ENCODE measurements at regions of chr15 and their contacts with region 1.

Region 1: GRCh38 chr15:52179278-52180195 is 11.7 kb downstream of the GNB5 start:
- DNase-seq: peak; percentile 90
- H3K4me3 ChIP-seq: peak overlapping the region; percentile 85
- H3K27ac ChIP-seq: peak overlapping the region; percentile 81
- H3K4me1 ChIP-seq: peaks cover 65% of the 10 kb centered on the region
- CTCF ChIP-seq: no peak

Region 2: GRCh38 chr15:51966192-51966591 is 213.3 kb before region 1 on chr15:
- CTCF ChIA-PET with region 1: no interaction called
- POLR2A ChIA-PET with region 1: no interaction called
- intact Hi-C with region 1: no loop called
- DNase-seq: no peak
- H3K4me3 ChIP-seq: no peak overlapping the region
- H3K27ac ChIP-seq: no peak overlapping the region
- H3K4me1 ChIP-seq: peaks cover 11% of the 10 kb centered on the region
- CTCF ChIP-seq: no peak

Region 3: GRCh38 chr15:52039925-52040781 is 139.4 kb before region 1 on chr15:
- CTCF ChIA-PET with region 1: no interaction called
- POLR2A ChIA-PET with region 1: no interaction called
- intact Hi-C with region 1: no loop called
- DNase-seq: peak; percentile 25
- H3K4me3 ChIP-seq: no peak overlapping the region
- H3K27ac ChIP-seq: peak overlapping the region; percentile 20
- H3K4me1 ChIP-seq: peaks cover 85% of the 10 kb centered on the region
- CTCF ChIP-seq: no peak

Region 4: GRCh38 chr15:52100807-52101206 is 78.7 kb before region 1 on chr15:
- CTCF ChIA-PET with region 1: no interaction called
- POLR2A ChIA-PET with region 1: no interaction called
- intact Hi-C with region 1: no loop called
- DNase-seq: no peak
- H3K4me3 ChIP-seq: no peak overlapping the region
- H3K27ac ChIP-seq: no peak overlapping the region
- H3K4me1 ChIP-seq: peaks cover 35% of the 10 kb centered on the region
- CTCF ChIP-seq: no peak

Region 5: GRCh38 chr15:52164631-52165265 is 14.8 kb before region 1 on chr15:
- CTCF ChIA-PET with region 1: no interaction called
- POLR2A ChIA-PET with region 1: interaction called, 16 read pairs
- intact Hi-C with region 1: no loop called
- DNase-seq: peak; percentile 65
- H3K4me3 ChIP-seq: peak overlapping the region; percentile 33
- H3K27ac ChIP-seq: peak overlapping the region; percentile 30
- H3K4me1 ChIP-seq: peaks cover 23% of the 10 kb centered on the region
- CTCF ChIP-seq: no peak

Region 6: GRCh38 chr15:52208306-52208946 is 28.9 kb after region 1 on chr15:
- CTCF ChIA-PET with region 1: interaction called, 10 read pairs
- POLR2A ChIA-PET with region 1: interaction called, 6 read pairs
- intact Hi-C with region 1: loop called (anchors 2 kb)
- DNase-seq: peak; percentile 79
- H3K4me3 ChIP-seq: no peak overlapping the region
- H3K27ac ChIP-seq: no peak overlapping the region
- H3K4me1 ChIP-seq: peaks cover 3% of the 10 kb centered on the region
- CTCF ChIP-seq: peak; percentile 98

Region 7: GRCh38 chr15:52217186-52217585 is 37.6 kb after region 1 on chr15:
- CTCF ChIA-PET with region 1: interaction called, 10 read pairs
- POLR2A ChIA-PET with region 1: interaction called, 13 read pairs
- intact Hi-C with region 1: loop called (anchors 2 kb)
- DNase-seq: peak; percentile 81
- H3K4me3 ChIP-seq: no peak overlapping the region
- H3K27ac ChIP-seq: peak overlapping the region; percentile 97
- H3K4me1 ChIP-seq: peaks cover 49% of the 10 kb centered on the region
- CTCF ChIP-seq: peak; percentile 90

Region 8: GRCh38 chr15:52227456-52227855 is 47.9 kb after region 1 on chr15:
- CTCF ChIA-PET with region 1: interaction called, 10 read pairs
- POLR2A ChIA-PET with region 1: interaction called, 33 read pairs
- intact Hi-C with region 1: loop called (anchors 1 kb)
- DNase-seq: peak; percentile 92
- H3K4me3 ChIP-seq: no peak overlapping the region
- H3K27ac ChIP-seq: peak overlapping the region; percentile 20
- H3K4me1 ChIP-seq: peaks cover 90% of the 10 kb centered on the region
- CTCF ChIP-seq: peak; percentile 83

Region 9: GRCh38 chr15:52379395-52380106 is 200.0 kb after region 1 on chr15:
- CTCF ChIA-PET with region 1: no interaction called
- POLR2A ChIA-PET with region 1: no interaction called
- intact Hi-C with region 1: no loop called
- DNase-seq: no peak
- H3K4me3 ChIP-seq: no peak overlapping the region
- H3K27ac ChIP-seq: no peak overlapping the region
- H3K4me1 ChIP-seq: no peaks in the 10 kb centered on the region
- CTCF ChIP-seq: no peak